ENCODE measurements at regions of chr1 and their contacts with region 1.

Region 1: DNA sequence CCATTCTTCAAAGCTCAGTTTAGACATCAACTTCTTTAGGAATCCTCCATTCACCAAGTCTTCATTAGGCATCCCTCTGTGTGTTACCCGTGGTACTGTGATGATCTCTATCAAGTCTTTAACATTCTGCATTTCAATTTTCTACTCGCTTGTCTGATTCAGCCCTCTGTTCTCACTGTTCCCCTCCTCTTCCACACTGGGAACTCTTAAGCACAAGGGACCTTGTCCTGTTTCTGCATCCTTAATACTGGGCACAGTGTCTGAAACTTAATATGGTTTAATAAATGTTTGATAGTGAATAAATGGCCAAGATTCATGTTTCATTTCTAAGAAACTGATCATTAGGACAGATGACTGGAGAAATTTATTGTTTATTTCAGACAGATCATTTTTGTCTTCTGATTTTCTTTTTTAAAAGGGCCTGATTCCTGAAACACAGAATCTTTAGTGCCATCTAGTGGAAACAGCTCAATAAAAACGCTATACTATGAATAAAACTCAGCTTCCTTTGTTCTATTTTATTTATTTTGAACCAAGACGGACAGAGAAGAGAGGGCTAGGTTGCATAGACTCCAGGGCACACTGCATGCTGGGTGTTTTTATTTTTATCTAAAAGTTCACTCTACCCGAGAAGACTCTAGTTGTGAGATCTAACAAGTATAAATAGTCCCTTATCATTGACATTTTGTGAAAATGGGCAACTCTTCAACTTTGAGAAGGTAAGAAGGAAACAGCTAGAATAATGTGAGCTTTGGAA is 7.0 kb upstream of the TRIM45 start:
- DNase-seq: no peak
- H3K4me3 Mint-ChIP-seq: no peak overlapping the region
- H3K27ac Mint-ChIP-seq: no peak overlapping the region
- H3K4me1 Mint-ChIP-seq: no peaks in the 10 kb centered on the region
- H3K27me3 Mint-ChIP-seq: peaks cover 22% of the 10 kb centered on the region

Region 2: GRCh38 chr1:117067533-117068370 is 60.7 kb before region 1 on chr1:
- intact Hi-C with region 1: loop called (anchors 1 kb)
- DNase-seq: peak; percentile 79
- H3K4me3 Mint-ChIP-seq: no peak overlapping the region
- H3K27ac Mint-ChIP-seq: no peak overlapping the region
- H3K4me1 Mint-ChIP-seq: peaks cover 35% of the 10 kb centered on the region
- H3K27me3 Mint-ChIP-seq: no peaks in the 10 kb centered on the region